Activated naive CD4-positive, alpha-beta T cell treated with anti-CD3 and anti-CD28 coated beads for 36 hours (primary cell): ENCODE measurements at regions of chr1 and their contacts with region 1.

Region 1: GRCh38 chr1:54488779-54489626 is 59.0 kb upstream of the ACOT11 start:
- DNase-seq: peak; percentile 61
- H3K4me3 Mint-ChIP-seq: peak overlapping the region; percentile 76
- H3K27ac Mint-ChIP-seq: peak overlapping the region; percentile 63
- H3K4me1 Mint-ChIP-seq: peaks cover 37% of the 10 kb centered on the region
- H3K27me3 Mint-ChIP-seq: peaks cover 2% of the 10 kb centered on the region

Region 2: GRCh38 chr1:53860967-53861411 is 628.0 kb before region 1 on chr1:
- CTCF ChIA-PET with region 1: no interaction called
- intact Hi-C with region 1: loop called (anchors 10 kb)
- DNase-seq: peak; percentile 67
- H3K4me3 Mint-ChIP-seq: no peak overlapping the region
- H3K27ac Mint-ChIP-seq: no peak overlapping the region
- H3K4me1 Mint-ChIP-seq: peaks cover 18% of the 10 kb centered on the region
- H3K27me3 Mint-ChIP-seq: no peaks in the 10 kb centered on the region

Region 3: DNA sequence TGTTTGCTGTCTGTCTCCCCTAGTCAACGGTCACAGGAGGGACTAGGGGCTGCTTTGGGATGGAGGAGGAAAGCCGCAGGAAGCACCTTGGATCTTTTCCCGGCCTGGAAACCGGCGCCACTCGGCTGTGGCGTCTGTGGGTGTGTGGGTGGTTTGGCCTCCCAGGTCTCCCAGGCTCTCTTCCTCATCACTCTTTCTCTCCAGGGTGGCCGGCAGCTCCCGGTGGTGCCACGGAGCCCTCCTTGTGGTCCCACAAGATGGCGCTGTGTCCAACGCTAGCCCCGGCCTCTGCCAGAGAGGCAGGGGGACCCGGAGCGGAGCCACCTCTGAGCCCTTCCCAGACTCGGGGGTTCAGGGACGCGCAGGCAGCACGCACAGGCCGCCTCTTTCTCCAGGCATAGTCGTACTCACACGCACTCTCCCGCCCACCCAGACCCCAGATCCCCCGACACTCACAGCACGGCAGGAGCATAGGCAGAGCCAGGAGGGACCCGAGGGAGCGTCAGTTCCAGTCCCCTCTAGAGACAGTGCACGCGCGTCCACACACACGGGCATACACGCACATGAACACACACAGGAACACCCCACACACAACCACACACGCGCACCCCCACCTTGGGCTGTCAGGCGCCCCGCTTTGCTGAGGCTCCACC is 367.4 kb before region 1 on chr1:
- CTCF ChIA-PET with region 1: interaction called, 8 read pairs
- intact Hi-C with region 1: loop called (anchors 1 kb)
- DNase-seq: peak; percentile 81
- H3K4me3 Mint-ChIP-seq: peak overlapping the region; percentile 5
- H3K27ac Mint-ChIP-seq: no peak overlapping the region
- H3K4me1 Mint-ChIP-seq: peaks cover 8% of the 10 kb centered on the region
- H3K27me3 Mint-ChIP-seq: no peaks in the 10 kb centered on the region

Region 4: DNA sequence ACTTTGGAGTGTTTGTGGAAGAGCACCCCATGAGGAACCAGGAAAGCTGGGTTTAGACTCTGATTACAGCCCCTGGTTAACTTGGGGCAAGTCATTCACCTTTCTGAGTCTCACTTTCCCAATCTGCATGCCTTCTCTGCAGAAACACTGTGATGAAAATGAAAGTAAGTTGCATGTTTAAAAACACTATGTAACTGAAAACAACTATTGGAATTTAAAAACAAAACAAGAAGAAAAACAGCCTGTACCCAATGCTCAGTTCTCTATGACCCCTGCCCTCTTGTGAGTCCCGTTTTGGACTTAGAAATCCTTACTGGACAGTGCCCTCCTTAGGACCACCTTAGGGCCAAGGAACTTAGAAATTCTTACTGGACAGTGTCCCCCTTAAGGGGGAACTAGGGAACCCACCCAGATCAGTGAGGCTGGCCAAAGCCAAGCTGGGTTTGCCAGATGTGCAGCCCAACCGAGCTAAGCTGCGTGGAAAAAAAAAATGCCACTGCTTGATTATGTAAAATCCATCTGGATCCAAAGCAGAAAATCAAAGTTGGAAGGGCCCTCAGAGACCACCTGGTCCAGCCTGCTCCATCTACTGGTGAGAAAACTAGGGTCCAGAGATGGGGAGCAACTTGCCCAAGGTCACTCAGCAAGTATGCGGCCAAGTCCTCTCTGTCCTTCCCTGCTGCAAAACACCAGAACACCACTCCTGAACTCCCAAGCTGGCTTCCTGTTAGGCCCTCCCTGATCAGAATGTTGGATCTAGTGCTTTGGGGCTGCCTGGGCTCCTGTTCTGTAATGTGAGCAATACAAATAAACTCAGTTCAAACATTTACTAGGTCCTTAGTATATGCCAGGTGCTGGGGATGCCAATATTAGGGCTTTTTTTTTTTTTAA is 211.3 kb before region 1 on chr1:
- CTCF ChIA-PET with region 1: interaction called, 4 read pairs
- intact Hi-C with region 1: loop called (anchors 2 kb)
- DNase-seq: no peak
- H3K4me3 Mint-ChIP-seq: peak overlapping the region; percentile 44
- H3K27ac Mint-ChIP-seq: peak overlapping the region; percentile 93
- H3K4me1 Mint-ChIP-seq: peaks cover 62% of the 10 kb centered on the region
- H3K27me3 Mint-ChIP-seq: no peaks in the 10 kb centered on the region

Region 5: GRCh38 chr1:54355931-54356679 is 132.9 kb before region 1 on chr1:
- CTCF ChIA-PET with region 1: interaction called, 9 read pairs
- intact Hi-C with region 1: loop called (anchors 1 kb)
- DNase-seq: peak; percentile 56
- H3K4me3 Mint-ChIP-seq: peak overlapping the region; percentile 80
- H3K27ac Mint-ChIP-seq: peak overlapping the region; percentile 88
- H3K4me1 Mint-ChIP-seq: peaks cover 91% of the 10 kb centered on the region
- H3K27me3 Mint-ChIP-seq: no peaks in the 10 kb centered on the region

Region 6: GRCh38 chr1:54499360-54500106 is 10.5 kb after region 1 on chr1:
- CTCF ChIA-PET with region 1: interaction called, 10 read pairs
- intact Hi-C with region 1: no loop called
- DNase-seq: peak; percentile 60
- H3K4me3 Mint-ChIP-seq: peak overlapping the region; percentile 63
- H3K27ac Mint-ChIP-seq: no peak overlapping the region
- H3K4me1 Mint-ChIP-seq: peaks cover 8% of the 10 kb centered on the region
- H3K27me3 Mint-ChIP-seq: peaks cover 13% of the 10 kb centered on the region